Heart left ventricle (tissue), 16 donors: ENCODE measurements at regions of chr14 and their contacts with region 1.

Region 1: DNA sequence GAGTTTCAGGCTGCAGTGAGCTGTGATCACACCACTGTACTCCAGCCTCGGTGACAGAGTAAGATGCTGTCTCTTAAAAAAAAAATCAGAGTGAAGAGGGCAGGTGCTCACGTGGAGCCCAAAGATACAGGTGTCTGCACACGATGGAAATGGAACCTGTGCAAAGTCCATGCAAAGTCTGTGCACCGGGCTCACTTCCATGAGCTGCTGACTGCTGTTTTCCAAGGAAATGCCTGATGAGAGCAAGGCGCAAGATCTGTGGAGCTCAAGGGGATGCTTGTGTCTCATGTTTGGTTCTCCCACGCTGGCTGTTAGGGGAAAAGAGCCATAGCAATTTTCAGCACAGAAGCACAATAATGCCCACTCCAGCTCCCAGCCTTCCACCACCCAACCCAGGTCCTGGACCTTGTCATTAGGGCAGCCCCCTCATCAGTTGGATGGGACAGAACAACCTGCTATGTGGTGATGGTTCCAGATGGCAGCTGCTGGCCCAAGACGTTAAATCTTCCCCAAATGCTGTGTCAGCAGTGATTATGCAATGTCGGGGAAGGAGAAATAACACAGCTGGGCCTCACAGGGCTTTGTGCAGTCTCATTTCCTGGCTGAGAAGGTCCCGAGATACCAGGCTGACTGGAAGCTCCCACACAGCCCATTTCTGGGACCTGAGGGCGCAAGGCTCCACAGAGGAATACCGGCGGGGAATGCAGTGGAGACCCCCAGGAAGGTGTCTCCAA is 27.9 kb upstream of the DICER1 start:
- DNase-seq: peak; percentile 64 to 78 (median 74)
- ATAC-seq: peak; percentile 71 to 91 (median 86)
- H3K4me3 ChIP-seq: peak overlapping the region in 6 of 12 donors; percentile 8 to 51 (median 17)
- H3K27ac ChIP-seq: peak overlapping the region; percentile 69 to 97 (median 84)
- H3K4me1 ChIP-seq: peaks cover 11 to 73% (median 54%) of the 10 kb centered on the region in 12 donors
- H3K27me3 ChIP-seq: peaks cover 0 to 7% (median 0%) of the 10 kb centered on the region in 9 donors
- CTCF ChIP-seq: no peak
- POLR2A ChIP-seq: no peak

Region 2: DNA sequence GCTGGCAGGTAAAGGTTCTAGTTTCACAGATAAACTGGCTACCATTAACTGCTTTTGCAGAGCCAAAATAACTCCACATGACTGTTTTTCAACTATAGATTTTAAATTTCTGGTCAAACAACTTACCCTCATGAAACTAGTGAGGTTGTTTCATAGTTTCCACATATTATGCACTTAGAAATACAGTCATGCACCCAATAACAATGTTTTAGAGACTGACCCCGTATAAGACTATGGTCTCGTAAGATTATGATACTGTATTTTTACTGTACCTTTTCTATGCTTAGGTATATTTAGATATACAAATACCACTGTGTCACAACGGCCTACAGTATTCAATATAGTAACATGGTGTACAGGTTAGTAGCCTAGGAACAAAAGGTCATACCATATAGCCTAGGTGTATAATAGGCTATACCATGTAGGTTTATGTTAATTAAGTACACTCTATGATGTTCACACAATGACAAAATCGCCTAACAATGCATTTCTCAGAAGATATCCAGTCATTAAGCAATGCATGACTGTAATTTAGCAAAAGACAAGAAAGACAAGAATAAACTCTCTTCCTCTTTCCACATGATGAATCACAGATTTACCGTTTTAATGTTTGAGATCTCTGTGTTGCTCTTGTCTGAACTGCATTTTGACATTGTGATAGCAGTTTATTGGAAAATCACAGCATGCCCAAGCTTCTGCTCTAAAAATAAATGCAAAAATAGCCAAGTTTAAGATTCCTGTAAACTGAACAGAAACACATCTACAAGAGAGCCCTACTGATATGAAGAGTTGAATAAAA is 44.9 kb before region 1 on chr14:
- intact Hi-C with region 1: loop called in 2 of 10 experiments (anchors 5 kb)
- DNase-seq: no peak
- ATAC-seq: peak in 2 of 4 donors; percentile 35 to 39
- H3K4me3 ChIP-seq: no peak overlapping the region
- H3K27ac ChIP-seq: peak overlapping the region in 5 of 12 donors; percentile 3 to 82 (median 14)
- H3K4me1 ChIP-seq: peaks cover 13 to 75% (median 64%) of the 10 kb centered on the region in 12 donors
- H3K27me3 ChIP-seq: no peaks in the 10 kb centered on the region
- CTCF ChIP-seq: no peak
- POLR2A ChIP-seq: no peak

Region 3: GRCh38 chr14:95255487-95255886 is 70.3 kb after region 1 on chr14:
- intact Hi-C with region 1: no loop called
- DNase-seq: peak in 3 of 5 donors; percentile 48 to 58 (median 50)
- ATAC-seq: peak in 3 of 4 donors; percentile 41 to 55 (median 55)
- H3K4me3 ChIP-seq: no peak overlapping the region
- H3K27ac ChIP-seq: no peak overlapping the region
- H3K4me1 ChIP-seq: peaks cover 6 to 44% (median 13%) of the 10 kb centered on the region in 12 donors
- H3K27me3 ChIP-seq: peaks cover 0 to 3% (median 0%) of the 10 kb centered on the region in 9 donors
- CTCF ChIP-seq: no peak
- POLR2A ChIP-seq: no peak

Region 4: GRCh38 chr14:95389471-95390011 is 204.3 kb after region 1 on chr14:
- intact Hi-C with region 1: loop called in 1 of 10 experiments (anchors 10 kb)
- DNase-seq: peak; percentile 84 to 97 (median 91)
- ATAC-seq: peak; percentile 92 to 97 (median 96)
- H3K4me3 ChIP-seq: no peak overlapping the region
- H3K27ac ChIP-seq: peak overlapping the region; percentile 72 to 98 (median 86)
- H3K4me1 ChIP-seq: peaks cover 0 to 28% (median 13%) of the 10 kb centered on the region in 12 donors
- H3K27me3 ChIP-seq: no peaks in the 10 kb centered on the region
- CTCF ChIP-seq: no peak
- POLR2A ChIP-seq: peak in 1 of 2 donors; percentile 35

Region 5: DNA sequence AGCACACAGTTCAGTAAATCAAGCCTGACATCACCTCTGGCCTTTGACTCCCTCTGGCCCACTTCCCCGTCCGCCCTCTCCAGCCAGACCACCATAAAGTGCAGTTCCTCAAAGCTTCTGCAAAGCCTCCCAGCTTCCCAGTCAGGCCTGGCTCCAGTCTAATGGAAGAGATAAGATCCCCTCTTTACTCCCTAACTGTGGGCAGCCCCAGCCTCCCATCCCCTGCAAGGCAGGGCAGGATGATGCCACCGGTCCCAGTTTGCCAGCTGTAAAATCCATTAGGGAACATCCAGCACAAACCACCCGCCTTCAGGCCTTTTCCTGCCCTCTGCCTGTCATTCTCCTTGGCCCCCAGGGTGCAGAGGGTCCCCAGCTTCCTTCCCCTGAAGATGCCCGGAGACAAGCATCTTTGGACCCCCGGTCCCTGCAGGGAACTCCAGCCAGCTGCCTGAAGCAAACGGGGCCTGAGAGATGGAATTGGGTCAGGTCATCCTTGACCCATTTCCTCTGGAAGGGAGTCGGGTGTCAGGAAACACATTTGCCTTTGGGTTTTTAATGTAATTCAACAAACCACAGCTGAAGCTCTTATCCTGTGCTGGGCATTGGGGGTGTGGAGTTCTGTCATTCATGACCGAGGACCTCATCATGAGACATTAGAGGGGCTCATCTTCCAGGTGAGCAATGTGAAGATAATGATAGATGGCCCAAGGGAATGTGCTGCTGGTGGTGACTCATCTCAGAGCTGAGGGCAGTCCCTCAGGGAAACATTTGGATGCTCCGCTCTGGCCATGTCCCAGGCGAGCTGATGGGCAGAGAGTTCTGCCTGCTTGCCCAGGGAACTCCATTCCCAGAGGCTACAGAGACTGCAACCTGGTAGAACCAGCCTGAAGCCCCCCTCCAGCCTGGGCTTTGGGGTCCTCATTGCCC is 228.4 kb after region 1 on chr14:
- intact Hi-C with region 1: loop called in 1 of 10 experiments (anchors 10 kb)
- DNase-seq: no peak
- ATAC-seq: no peak
- H3K4me3 ChIP-seq: no peak overlapping the region
- H3K27ac ChIP-seq: no peak overlapping the region
- H3K4me1 ChIP-seq: peaks cover 6 to 30% (median 16%) of the 10 kb centered on the region in 12 donors
- H3K27me3 ChIP-seq: no peaks in the 10 kb centered on the region
- CTCF ChIP-seq: no peak
- POLR2A ChIP-seq: no peak